ENCODE measurements at regions of chr7 and their contacts with region 1.

Region 1: GRCh38 chr7:129218514-129219062 is 6.2 kb upstream of the AHCYL2 start:
- DNase-seq: peak; percentile 90
- H3K4me3 ChIP-seq: peak overlapping the region in 1 of 2 experiments; percentile 25; a peak in 1 of 4 replicates
- H3K27ac ChIP-seq: no peak overlapping the region
- H3K4me1 ChIP-seq: peaks cover 0 to 8% of the 10 kb centered on the region in 2 experiments; a peak in 1 of 4 replicates
- H3K27me3 ChIP-seq: no peaks in the 10 kb centered on the region
- CTCF ChIP-seq: peak; percentile 99
- EP300 ChIP-seq: no peak
- RAD21 ChIP-seq: peak; percentile 99

Region 2: GRCh38 chr7:129188372-129188891 is 30.2 kb before region 1 on chr7 and contains the start of gene SMO:
- CTCF ChIA-PET with region 1: interaction called, 29 read pairs
- POLR2A ChIA-PET with region 1: no interaction called
- DNase-seq: peak; percentile 96
- H3K4me3 ChIP-seq: peak within 1 kb of the TSS; percentile 72 to 93
- H3K27ac ChIP-seq: peak within 1 kb of the TSS; percentile 42 to 54; a peak in 2 of 4 replicates
- H3K4me1 ChIP-seq: peaks cover 0 to 20% of the 10 kb centered on the region in 2 experiments; a peak in 2 of 4 replicates
- H3K27me3 ChIP-seq: no peaks in the 10 kb centered on the region
- CTCF ChIP-seq: no peak
- EP300 ChIP-seq: 0 out of 4 replicates have a peak, but pooled peaks of 1 of the 2 experiments have one; percentile 12
- RAD21 ChIP-seq: no peak
- polyA plus RNA-seq, gene SMO: 34.5 and 37.0 TPM in 2 replicates

Region 3: DNA sequence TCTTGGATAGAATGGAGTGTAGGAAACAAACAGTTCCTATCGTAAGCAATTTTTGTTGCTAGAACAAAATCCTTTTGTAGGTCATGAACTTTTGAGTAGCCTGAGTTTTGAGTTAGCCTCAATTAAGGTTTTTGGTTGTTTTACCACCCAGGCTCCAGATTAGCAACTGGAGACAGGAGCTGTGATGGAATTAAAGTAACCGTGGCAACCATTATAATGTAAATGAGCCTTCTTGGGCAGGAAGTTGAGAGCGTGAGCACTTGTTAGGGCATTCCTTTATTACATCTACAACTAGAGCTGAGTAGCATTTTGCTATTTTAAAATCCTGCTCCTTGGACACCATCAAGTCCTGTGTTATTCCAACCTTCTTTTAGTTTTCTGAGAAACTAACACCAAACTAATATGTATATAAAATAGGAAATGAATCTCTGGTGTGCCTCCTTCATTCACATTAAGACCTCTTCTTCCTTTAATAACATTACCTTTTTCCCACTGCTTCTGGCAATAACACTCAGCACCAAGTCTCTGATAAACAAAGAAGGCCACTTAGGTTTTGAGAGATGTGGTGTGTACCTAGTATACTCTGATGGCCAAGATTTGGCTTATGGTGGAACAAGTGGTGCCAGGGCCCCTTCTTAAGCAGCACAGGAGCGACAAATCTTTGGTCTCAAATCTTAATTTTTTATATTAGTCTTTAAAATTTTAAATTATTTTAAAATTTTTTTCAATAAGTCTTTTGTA is 40.2 kb after region 1 on chr7:
- CTCF ChIA-PET with region 1: interaction called, 27 read pairs
- POLR2A ChIA-PET with region 1: no interaction called
- DNase-seq: no peak
- H3K4me3 ChIP-seq: no peak overlapping the region
- H3K27ac ChIP-seq: no peak overlapping the region
- H3K4me1 ChIP-seq: no peaks in the 10 kb centered on the region
- H3K27me3 ChIP-seq: no peaks in the 10 kb centered on the region
- CTCF ChIP-seq: no peak
- EP300 ChIP-seq: no peak
- RAD21 ChIP-seq: no peak

Region 4: DNA sequence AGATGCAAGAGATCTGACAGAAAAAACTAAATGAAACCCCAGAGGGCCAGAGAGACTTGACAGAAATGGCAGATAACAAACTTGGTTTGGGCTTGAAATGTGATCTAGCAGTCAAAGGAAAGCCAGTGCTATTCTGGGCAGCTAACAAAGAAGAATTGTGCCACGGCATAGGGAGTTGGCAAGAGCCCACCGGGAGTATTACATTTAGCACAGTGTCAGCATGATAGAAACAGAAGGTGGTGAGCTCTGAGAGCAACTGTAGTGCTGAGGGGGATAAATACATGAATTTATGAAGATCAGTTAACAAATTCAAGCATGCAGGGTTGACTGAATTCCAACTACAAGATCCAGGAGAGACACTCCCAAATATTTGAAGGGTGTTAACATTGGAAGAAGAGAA is 97.4 kb after region 1 on chr7:
- CTCF ChIA-PET with region 1: interaction called, 68 read pairs
- POLR2A ChIA-PET with region 1: no interaction called
- DNase-seq: no peak
- H3K4me3 ChIP-seq: no peak overlapping the region
- H3K27ac ChIP-seq: no peak overlapping the region
- H3K4me1 ChIP-seq: no peaks in the 10 kb centered on the region
- H3K27me3 ChIP-seq: no peaks in the 10 kb centered on the region
- CTCF ChIP-seq: no peak
- EP300 ChIP-seq: no peak
- RAD21 ChIP-seq: no peak

Region 5: DNA sequence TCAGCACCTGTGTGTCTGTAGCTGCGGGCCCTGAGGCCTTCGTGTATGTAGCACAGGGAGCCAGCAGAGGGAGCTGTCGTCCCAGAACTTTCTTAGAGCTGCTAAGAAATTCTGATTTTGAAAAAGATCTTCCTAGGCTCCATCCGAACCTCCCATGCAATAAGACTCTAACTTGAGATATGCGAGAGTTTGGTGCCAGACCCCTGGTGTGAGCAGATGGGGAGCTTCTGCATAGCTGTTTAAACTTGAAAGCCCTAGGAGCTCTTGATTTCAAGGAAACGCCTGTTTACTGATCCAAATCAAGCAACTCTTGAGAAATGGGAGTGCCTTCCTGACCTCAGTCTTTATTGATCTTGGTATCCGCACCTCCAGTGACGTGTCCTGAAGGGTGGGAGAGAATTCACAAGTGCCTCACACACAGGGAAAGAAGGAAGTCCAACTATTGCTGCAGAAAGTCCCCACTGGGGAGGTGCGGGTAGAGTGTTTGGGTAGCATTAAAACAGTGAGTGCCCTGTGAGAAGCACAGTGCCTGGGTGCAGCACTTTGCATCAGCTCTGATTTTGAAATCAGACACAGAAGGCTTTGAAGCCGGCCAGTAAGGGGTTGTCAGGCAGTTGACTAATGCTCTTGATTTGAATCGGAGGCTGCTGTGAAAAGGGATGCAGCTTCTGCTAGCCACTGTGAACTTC is 149.3 kb after region 1 on chr7:
- CTCF ChIA-PET with region 1: interaction called, 66 read pairs
- POLR2A ChIA-PET with region 1: no interaction called
- DNase-seq: peak; percentile 80
- H3K4me3 ChIP-seq: no peak overlapping the region; a peak in 1 of 4 replicates
- H3K27ac ChIP-seq: no peak overlapping the region
- H3K4me1 ChIP-seq: peaks cover 0 to 3% of the 10 kb centered on the region in 2 experiments; a peak in 1 of 4 replicates
- H3K27me3 ChIP-seq: no peaks in the 10 kb centered on the region
- CTCF ChIP-seq: peak; percentile 99
- EP300 ChIP-seq: no peak
- RAD21 ChIP-seq: peak; percentile 96

Region 6: DNA sequence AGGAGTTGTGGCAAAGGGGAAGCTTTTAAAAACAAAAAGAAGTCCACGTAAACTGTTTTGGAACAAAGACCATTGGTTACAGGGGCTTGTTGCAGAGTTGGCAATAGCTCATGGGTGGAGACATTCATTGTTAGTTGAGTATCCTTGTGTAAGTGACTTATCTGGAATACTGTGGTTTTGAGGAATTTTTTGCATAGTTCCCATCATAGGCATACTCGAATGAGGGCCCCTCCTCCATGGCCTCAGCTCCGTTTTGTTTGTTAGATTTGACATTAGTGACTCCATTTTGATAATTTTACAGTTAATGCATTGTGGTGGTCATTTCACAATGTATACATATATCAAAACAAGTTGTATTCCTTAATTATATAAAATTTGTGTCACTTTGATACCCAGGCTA is 270.9 kb after region 1 on chr7:
- CTCF ChIA-PET with region 1: interaction called, 15 read pairs
- POLR2A ChIA-PET with region 1: no interaction called
- DNase-seq: no peak
- H3K4me3 ChIP-seq: no peak overlapping the region
- H3K27ac ChIP-seq: no peak overlapping the region
- H3K4me1 ChIP-seq: no peaks in the 10 kb centered on the region
- H3K27me3 ChIP-seq: no peaks in the 10 kb centered on the region
- CTCF ChIP-seq: no peak
- EP300 ChIP-seq: no peak
- RAD21 ChIP-seq: no peak

Measured in SK-N-SH (cell line).